ENCODE measurements at regions of chr15 and their contacts with region 1.

Region 1: DNA sequence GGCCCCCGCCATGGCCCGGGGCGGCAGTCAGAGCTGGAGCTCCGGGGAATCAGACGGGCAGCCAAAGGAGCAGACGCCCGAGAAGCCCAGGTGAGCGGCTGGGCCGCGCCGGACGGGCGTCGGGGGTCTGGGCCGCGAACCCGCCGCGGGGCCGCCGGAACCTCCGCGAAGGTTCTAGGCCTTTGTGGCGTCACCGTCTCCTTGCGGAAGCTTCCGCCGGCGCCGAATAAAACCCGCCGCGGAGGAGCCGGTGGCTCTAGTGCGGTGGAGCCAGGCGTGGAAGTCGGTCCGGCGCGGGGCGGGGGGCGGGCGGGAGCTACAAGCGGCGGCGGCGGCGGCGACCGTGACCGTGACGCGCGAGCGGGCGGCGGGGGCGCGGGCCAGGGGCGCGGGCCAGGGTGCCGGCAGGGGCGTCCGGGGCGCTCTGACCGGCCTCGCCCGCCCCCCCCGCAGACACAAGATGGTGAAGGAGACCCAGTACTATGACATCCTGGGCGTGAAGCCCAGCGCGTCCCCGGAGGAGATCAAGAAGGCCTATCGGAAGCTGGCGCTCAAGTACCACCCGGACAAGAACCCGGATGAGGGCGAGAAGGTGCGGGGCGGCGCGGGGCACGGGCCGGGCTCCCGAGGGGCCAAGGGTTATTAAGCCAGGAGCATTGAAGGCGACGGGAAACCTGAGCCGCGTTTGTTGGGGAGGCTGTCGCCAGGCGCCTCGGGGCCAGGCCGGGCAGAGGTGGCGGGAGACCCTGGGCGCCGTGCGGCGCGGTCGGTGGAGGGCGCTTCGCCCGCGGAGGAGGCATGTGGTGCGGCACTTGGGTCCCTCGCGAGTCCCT is at the start of gene DNAJA4:
- DNase-seq: peak; percentile 78
- ATAC-seq: peak; percentile 86
- H3K4me3 Mint-ChIP-seq: peak within 1 kb of the TSS; percentile 79
- H3K27ac Mint-ChIP-seq: peak within 1 kb of the TSS; percentile 81
- H3K4me1 Mint-ChIP-seq: peaks cover 20% of the 10 kb centered on the region
- H3K27me3 Mint-ChIP-seq: no peaks in the 10 kb centered on the region
- total RNA-seq, gene DNAJA4: 34.0 to 35.8 TPM

Region 2: DNA sequence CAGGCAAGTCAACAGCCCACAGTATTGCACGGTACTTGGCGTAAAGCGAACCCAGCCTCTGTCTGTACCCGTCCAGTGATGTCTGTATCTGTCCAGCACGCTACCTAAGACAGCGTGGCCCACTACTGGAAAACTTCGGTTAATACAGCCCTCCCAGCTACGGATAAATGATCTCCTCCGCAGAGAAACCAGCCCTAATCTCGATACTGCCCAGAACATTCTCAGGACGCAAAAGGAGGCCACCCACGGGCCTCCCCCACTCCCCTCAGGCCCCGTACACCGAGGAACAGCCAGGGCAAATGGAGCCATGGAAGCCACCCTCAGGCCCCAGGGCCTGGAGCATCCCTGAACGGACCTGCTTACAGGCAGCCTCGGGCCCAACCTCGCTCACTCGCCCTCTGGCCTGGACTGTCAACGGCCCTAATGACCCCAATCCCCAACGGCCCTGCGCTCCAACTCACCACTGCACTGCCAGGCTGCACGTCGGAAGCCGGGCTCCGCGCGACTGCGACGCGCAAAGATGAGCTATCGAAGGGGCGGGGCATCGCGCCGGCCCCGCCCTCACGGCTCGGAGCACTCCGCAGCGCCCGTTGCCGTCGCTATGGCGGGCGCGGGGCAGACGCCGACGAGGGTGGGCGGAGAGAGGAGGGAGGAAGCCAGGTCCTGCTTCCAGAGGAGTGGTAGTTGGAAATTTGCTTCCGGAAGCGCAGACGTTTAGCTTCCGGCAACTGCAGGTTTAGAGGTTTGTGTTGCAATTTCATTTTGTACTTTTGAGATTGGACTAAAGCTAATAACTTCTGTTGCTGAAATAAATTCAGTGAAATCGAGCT is 34.8 kb after region 1 on chr15 and contains the start of gene SKIC8:
- CTCF ChIA-PET with region 1: interaction called, 25 read pairs
- DNase-seq: peak; percentile 95
- ATAC-seq: peak; percentile 97
- H3K4me3 Mint-ChIP-seq: peak within 1 kb of the TSS; percentile 97
- H3K27ac Mint-ChIP-seq: peak within 1 kb of the TSS; percentile 95
- H3K4me1 Mint-ChIP-seq: peaks cover 43% of the 10 kb centered on the region
- H3K27me3 Mint-ChIP-seq: peaks cover 7% of the 10 kb centered on the region
- total RNA-seq, gene SKIC8: 40.5 to 48.1 TPM